A549 (cell line): ENCODE measurements at regions of chr7 and their contacts with region 1.

Region 1: DNA sequence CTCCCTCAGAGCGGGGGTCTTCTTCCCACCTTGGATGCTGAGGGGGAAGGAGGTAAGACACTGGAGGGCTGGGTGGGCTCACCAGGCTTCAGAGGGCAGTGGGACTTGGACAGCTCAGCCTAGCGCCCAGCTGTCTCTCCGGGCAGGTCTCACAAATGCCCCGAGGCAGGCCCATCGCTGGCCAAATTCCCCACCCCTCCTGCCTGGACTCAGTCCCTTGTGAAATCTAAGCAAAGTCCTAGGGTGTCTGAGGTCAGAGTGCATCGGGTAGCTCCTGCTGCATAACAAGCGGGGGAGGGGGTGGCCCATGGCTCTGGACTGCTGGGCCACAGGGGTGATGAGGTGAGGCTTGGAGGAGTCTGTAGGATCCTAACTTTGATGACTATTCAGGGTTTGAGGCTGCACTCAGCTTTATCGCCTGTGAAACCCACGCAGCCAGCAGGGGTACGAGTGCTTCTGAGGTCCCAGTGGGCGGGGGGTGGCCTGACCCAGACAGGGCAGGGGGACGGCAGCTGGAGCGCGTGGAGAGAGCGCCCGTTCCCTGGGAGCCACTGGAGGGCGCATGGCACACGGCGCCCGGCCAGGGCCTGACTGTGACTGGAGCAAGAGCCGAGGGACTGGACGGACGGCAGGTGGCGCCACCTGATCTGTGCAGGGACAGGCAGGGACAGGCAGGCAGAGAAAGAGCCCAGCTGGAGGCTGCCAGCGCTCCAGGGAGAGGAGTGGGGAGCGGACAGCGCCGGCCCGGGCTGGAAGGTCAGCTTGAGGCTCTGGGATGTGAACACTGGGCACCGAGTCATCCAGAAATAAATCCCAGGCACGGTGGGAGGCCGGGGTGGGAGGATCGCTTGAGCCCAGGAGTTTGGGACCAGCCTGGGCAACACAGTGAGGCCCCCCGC is 10.0 kb downstream of the CYP2W1 start:
- DNase-seq: peak; percentile 69 to 97
- ATAC-seq: peak; percentile 91 to 97
- H3K4me3 ChIP-seq: no peak overlapping the region
- H3K27ac ChIP-seq: peak overlapping the region in 1 of 2 experiments; percentile 50; a peak in 1 of 6 replicates
- H3K4me1 ChIP-seq: peaks cover 17% of the 10 kb centered on the region
- CTCF ChIP-seq: peak; percentile 99
- EP300 ChIP-seq: no peak
- POLR2A ChIP-seq: no peak
- RAD21 ChIP-seq: peak; percentile 93 to 97

Region 2: DNA sequence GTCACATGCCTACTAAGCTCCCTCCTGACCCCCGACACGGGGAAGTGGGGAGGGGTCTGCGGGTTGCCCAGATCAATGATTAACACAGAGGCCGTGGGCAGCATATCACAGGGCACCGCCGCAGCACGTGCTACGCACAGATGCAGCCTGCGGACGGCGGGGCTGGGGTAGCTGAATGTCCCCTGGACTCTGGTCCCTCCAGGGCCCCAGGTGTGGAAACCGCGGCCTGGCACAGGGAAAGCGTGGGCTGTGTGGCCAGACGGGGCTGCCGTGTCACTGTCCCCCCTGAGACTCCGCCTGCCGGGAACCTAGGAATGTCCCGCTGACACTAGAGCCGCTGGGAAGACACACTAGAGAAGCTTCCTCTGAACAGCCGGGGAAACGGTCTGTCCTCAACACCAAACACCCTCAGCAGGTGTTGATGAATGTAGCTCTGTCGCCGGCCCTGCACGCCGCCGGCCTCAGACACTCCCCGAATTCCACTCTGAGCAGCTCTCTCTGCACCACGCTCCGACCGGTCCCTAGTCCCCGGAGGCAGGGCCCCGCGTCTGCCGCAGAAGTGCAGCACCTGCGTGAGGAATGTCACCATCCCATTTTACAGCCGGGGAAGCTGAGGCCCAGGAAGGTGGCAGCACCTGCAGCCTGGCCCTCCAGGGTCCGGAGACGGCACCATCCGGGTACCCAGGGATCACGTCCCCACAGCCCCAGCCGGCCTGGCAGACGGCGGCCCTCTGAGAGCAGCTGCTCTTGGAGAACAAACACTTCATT is 439.9 kb before region 1 on chr7:
- CTCF ChIA-PET with region 1: no interaction called
- POLR2A ChIA-PET with region 1: no interaction called
- DNase-seq: no peak
- ATAC-seq: no peak
- H3K4me3 ChIP-seq: no peak overlapping the region
- H3K27ac ChIP-seq: no peak overlapping the region
- H3K4me1 ChIP-seq: no peaks in the 10 kb centered on the region
- CTCF ChIP-seq: no peak
- EP300 ChIP-seq: no peak
- POLR2A ChIP-seq: no peak
- RAD21 ChIP-seq: no peak

Region 3: GRCh38 chr7:876167-876967 is 116.6 kb before region 1 on chr7 and contains the start of gene GET4:
- CTCF ChIA-PET with region 1: no interaction called
- POLR2A ChIA-PET with region 1: no interaction called
- DNase-seq: peak; percentile 79 to 96
- ATAC-seq: peak; percentile 87 to 89
- H3K4me3 ChIP-seq: peak within 1 kb of the TSS; percentile 69
- H3K27ac ChIP-seq: peak within 1 kb of the TSS; percentile 93 to 97
- H3K4me1 ChIP-seq: peaks cover 22% of the 10 kb centered on the region
- CTCF ChIP-seq: no peak; the same call in 2 of the 3 replicates
- EP300 ChIP-seq: no peak
- POLR2A ChIP-seq: peak; percentile 79
- RAD21 ChIP-seq: no peak
- polyA plus RNA-seq, gene GET4: 21.5 and 26.1 TPM in 2 replicates

Region 4: DNA sequence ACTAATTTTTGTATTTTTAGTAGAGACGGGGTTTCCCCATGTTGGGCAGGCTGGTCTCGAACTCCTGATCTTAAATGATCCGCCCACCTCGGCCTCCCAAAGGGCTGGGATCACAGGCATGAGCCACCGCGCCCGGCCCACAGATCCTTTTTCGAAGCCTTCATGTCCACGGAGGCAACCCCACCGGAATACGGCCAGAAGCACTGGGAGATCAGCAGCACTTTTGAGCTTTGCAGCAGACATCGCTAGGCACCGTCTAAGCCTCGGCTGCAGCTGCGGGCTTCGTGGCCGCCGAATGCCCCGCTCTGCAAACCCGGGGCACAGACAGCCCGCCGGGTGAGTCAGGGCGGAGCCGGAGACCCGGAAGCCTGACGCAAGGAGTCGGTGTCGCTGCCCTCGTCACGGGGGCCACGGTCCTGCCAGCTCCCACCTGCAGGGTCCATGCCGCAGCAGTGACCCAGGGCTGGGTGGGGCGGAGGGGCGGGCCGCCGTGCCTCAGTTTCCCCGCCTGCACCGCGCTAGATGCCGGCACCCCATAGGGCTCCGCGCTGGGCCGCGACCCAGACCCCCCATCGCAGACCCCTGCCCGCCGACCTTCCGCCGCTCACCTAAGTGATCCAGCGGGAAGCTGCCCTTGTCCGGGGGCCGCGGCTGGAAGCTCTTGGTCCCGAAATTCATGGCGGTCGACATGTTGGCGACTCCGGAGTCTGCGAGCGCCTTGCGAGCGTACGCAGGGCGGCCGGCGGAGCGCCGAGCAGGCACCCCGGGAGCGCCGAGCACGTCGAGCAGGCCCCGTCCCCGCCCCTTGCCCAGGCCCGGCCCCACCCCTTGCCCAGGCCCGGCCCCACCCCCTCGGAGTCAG is 17.9 kb before region 1 on chr7 and contains the start of gene COX19:
- CTCF ChIA-PET with region 1: interaction called, 108 read pairs
- POLR2A ChIA-PET with region 1: no interaction called
- DNase-seq: peak; percentile 68 to 92
- ATAC-seq: peak; percentile 86 to 93
- H3K4me3 ChIP-seq: peak within 1 kb of the TSS; percentile 77
- H3K27ac ChIP-seq: peak within 1 kb of the TSS; percentile 81 to 96
- H3K4me1 ChIP-seq: peaks cover 24% of the 10 kb centered on the region
- CTCF ChIP-seq: no peak
- EP300 ChIP-seq: no peak
- POLR2A ChIP-seq: peak; percentile 68
- RAD21 ChIP-seq: no peak
- polyA plus RNA-seq, gene COX19: 5.4 and 7.6 TPM in 2 replicates

Region 5: DNA sequence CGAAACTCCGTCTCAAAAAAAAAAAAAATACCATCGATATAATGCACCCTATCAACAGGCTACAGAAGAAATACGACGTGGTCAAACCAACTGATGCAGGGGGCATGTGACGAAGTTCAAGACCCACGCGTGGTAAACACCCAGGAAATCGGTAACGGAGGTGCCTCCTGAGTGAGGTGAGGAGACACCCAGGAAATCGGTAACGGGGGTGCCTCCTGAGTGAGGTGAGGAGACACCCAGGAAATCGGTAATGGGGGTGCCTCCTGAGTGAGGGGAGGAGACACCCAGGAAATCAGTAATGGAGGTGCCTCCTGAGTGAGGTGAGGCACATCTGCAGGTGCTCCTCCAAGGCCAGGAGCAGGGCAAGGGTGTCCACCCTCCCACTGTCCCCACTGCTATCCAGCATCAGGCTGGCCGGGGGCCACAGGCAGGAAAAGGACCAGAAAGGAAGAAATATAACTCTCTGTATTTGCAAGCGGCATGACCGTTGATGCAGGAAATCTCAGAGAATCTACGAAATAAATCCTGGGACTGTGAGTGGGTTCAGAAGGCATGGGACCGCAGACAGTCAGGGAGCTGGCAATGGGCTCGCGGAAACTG is 40.7 kb after region 1 on chr7:
- CTCF ChIA-PET with region 1: interaction called, 138 read pairs
- POLR2A ChIA-PET with region 1: no interaction called
- DNase-seq: no peak
- ATAC-seq: no peak
- H3K4me3 ChIP-seq: no peak overlapping the region
- H3K27ac ChIP-seq: no peak overlapping the region
- H3K4me1 ChIP-seq: peaks cover 10% of the 10 kb centered on the region
- CTCF ChIP-seq: no peak
- EP300 ChIP-seq: no peak
- POLR2A ChIP-seq: no peak
- RAD21 ChIP-seq: no peak

Region 6: DNA sequence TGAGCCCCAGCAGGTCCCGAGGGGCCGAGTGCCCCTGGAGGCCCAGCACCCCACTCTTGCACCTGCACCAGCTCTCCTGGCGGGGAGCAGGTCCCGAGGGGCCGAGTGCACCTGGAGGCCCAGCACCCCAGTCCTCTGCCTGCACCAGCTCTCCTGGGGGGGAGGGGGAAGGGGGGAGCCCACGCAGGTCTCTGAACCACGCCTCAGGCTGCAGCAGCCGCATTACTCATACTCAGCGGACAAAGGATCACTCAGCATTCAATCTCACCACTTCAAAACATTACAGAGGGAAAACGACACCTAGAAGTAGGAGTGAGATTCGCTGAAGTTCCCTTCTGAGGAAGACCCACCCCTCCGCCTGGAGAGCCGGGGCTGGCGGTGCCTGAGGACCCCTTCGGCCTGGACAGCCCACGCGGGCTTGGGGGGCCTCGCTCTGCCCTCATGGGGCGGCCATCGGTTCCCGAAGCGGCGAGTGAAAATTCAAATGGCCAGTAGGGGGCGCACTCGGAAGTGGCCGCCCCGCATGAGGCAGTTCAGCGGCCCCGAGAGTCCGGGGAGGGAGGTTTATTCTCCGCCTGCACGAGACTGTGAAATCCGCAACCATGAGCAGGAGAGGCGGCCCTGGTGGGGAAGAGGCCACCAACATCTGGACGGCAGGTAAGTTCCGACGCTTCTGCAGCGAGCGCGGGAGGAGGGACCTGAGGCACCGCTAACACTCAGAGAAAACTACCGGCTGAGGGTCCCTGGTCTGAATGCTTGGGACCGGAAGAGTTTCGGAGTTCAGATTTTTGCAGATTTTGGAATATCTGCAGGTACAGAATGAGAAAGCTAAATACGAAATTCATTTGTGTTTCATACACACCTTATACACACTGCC is 93.9 kb after region 1 on chr7:
- CTCF ChIA-PET with region 1: interaction called, 29 read pairs
- POLR2A ChIA-PET with region 1: no interaction called
- DNase-seq: peak; percentile 53 to 92
- ATAC-seq: peak; percentile 87 to 91
- H3K4me3 ChIP-seq: peak overlapping the region; percentile 18; the same call in 1 of the 3 replicates
- H3K27ac ChIP-seq: peak overlapping the region; percentile 60 to 85
- H3K4me1 ChIP-seq: peaks cover 21% of the 10 kb centered on the region
- CTCF ChIP-seq: peak; percentile 94
- EP300 ChIP-seq: no peak
- POLR2A ChIP-seq: no peak
- RAD21 ChIP-seq: peak; percentile 53 to 61

Region 7: DNA sequence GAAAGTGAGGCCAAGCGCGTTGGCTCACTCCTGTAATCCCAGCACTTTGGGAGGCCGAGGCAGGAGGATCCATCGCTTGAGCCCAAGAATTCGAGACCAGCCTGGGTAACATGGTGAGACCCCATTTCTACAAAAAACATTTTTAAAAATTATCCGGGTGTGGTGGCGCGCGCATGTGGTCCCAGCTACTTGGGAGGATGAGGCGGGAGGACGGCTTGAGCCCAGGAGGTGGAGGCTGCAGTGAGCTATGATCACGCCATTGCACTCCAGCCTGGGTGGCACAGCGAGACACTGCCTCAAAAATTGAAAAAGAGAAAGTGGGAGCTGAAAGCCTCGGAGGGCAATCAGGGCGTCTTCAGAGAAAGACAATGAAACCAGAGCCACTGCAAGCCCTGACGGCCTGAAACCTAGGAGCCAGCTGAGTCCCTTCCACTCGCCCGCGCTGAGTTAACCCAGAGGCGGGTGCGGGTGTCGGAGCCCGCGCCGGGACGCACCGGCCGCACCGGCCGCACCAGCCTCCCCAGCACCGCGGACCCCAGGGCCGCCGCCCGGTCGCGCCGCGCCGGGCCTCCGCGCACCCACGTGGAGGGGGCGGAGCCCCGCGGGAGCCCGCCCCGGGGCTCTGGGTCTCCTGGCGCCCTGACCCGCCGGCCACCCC is 144.7 kb after region 1 on chr7:
- CTCF ChIA-PET with region 1: interaction called, 24 read pairs
- POLR2A ChIA-PET with region 1: no interaction called
- DNase-seq: peak in 1 of 2 experiments; percentile 16
- ATAC-seq: peak; percentile 84 to 90
- H3K4me3 ChIP-seq: peak overlapping the region; percentile 70
- H3K27ac ChIP-seq: peak overlapping the region; percentile 84 to 97
- H3K4me1 ChIP-seq: peaks cover 8% of the 10 kb centered on the region; the same call in 2 of the 3 replicates
- CTCF ChIP-seq: no peak; the same call in 2 of the 3 replicates
- EP300 ChIP-seq: no peak
- POLR2A ChIP-seq: peak; percentile 31
- RAD21 ChIP-seq: no peak

Region 8: GRCh38 chr7:1567094-1567771 is 574.3 kb after region 1 on chr7:
- CTCF ChIA-PET with region 1: no interaction called
- POLR2A ChIA-PET with region 1: no interaction called
- DNase-seq: peak in 1 of 2 experiments; percentile 66
- ATAC-seq: peak in 1 of 2 experiments; percentile 2; a peak in 1 of 6 replicates
- H3K4me3 ChIP-seq: no peak overlapping the region; the same call in 2 of the 3 replicates
- H3K27ac ChIP-seq: peak overlapping the region; percentile 62 to 99
- H3K4me1 ChIP-seq: peaks cover 56% of the 10 kb centered on the region
- CTCF ChIP-seq: no peak
- EP300 ChIP-seq: no peak
- POLR2A ChIP-seq: no peak
- RAD21 ChIP-seq: no peak